Left lung (tissue), 14 donors: ENCODE measurements at regions of chr15 and their contacts with region 1.

Region 1: DNA sequence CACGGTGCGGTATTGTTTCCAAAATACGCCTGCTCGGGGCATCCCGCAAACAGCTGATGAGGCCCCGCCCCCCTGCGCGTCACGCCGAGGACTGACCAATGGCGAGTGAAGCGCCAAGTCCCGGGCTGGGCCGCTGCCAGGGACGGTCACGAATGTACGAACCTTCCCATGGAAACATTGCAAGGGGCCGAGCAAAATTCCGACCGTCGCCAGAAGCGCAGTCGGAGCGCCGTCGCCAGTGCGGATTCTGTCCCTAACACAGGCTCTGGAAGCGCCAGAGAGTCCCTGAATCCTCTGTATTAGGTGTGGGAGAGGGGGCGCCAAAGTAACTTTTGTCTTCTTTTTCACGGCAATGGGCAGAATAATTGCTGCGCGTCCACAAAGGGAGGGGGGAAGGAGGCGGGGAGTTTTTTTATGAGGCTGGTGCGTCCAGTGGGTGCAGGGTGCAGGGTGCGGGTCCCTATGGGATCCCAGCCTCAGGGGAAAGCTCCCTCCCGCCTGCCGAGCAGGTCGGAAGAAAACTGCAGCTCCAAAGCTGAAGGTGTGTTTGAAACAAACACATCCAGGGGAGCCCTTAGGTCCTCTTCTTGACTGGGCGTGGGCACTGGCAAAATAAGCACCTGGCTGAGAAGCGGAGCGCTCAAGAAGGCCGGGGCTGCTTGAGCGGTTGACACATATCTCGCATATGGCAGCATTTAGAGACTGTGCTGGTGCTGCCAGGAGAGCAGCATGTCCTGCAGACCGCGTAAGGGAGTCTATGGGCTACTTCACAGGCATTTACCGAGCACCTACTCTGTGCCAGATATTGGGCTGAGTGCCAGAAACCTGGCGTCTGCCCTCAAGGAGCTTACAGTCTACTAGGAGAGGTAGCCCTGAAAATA is at the start of gene BMF:
- DNase-seq: peak; percentile 99 to 100 (median 99)
- ATAC-seq: peak; percentile 82
- H3K4me3 ChIP-seq: peak within 1 kb of the TSS; percentile 80 to 82
- H3K27ac ChIP-seq: peak within 1 kb of the TSS; percentile 78 to 86
- H3K4me1 ChIP-seq: peaks cover 24 to 46% of the 10 kb centered on the region in 2 donors
- H3K27me3 ChIP-seq: no peaks in the 10 kb centered on the region
- CTCF ChIP-seq: peak; percentile 12 to 14
- polyA plus RNA-seq, gene BMF: 50.1 to 58.6 (median 52.1) TPM

Region 2: GRCh38 chr15:40044717-40045571 is 64.2 kb before region 1 on chr15:
- intact Hi-C with region 1: loop called in 1 of 2 experiments (anchors 5 kb)
- DNase-seq: peak; percentile 67 to 97 (median 90)
- ATAC-seq: peak; percentile 93
- H3K4me3 ChIP-seq: no peak overlapping the region
- H3K27ac ChIP-seq: peak overlapping the region; percentile 58 to 62
- H3K4me1 ChIP-seq: peaks cover 25 to 65% of the 10 kb centered on the region in 2 donors
- H3K27me3 ChIP-seq: no peaks in the 10 kb centered on the region
- CTCF ChIP-seq: peak; percentile 80 to 85